T-cell (primary cell): ENCODE measurements at regions of chr4 and their contacts with region 1.

Region 1: DNA sequence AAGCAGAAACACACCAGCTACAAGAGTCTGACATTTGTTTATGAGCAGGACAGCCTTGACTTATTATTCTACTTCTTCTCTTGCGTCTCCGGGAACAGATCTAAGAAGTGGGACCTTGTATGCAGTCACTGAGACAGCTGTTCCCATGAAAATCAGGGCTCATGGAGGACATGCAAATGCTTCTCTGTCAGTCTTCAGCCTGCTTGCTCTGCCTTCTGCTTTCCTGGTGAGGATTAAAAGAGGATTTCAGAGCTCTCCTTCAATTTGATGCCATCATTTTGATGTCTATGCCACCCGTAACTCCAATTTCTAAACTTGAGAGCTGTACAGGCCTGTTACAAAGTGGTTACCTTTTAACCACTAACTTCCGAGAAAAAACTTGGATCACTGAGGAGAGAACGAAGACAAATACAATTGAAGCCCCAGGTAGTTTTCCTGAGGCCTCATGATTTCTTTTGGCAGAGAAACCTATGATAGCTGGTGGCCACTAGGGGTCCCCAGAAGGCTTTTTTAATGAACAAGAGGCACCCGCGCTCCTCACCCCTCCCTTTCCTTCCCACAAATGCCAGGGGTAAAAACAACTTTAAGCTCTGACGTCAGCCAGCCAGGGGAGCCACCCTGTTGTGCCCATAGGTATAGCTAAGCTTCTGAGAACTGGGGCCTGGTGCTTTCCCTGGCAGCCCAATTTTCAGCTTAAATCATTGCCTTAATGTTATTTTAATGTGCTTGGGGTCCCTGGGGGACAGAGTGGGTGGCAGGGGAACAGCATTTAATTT is 97.0 kb downstream of the DDIT4L start:
- DNase-seq: peak; percentile 55 to 95 (median 90)
- ATAC-seq: peak; percentile 98 to 99 (median 98)
- H3K4me3 ChIP-seq: no peak overlapping the region
- H3K4me3 Mint-ChIP-seq: peak overlapping the region; percentile 7 to 44 (median 35)
- H3K27ac ChIP-seq: no peak overlapping the region
- H3K27ac Mint-ChIP-seq: peak overlapping the region; percentile 90 to 91
- H3K4me1 ChIP-seq: peaks cover 2 to 12% of the 10 kb centered on the region in 2 experiments
- H3K4me1 Mint-ChIP-seq: peaks cover 16 to 30% (median 29%) of the 10 kb centered on the region in 3 donors
- H3K27me3 ChIP-seq: no peaks in the 10 kb centered on the region
- H3K27me3 Mint-ChIP-seq: peaks cover 0 to 4% of the 10 kb centered on the region in 2 donors

Region 2: DNA sequence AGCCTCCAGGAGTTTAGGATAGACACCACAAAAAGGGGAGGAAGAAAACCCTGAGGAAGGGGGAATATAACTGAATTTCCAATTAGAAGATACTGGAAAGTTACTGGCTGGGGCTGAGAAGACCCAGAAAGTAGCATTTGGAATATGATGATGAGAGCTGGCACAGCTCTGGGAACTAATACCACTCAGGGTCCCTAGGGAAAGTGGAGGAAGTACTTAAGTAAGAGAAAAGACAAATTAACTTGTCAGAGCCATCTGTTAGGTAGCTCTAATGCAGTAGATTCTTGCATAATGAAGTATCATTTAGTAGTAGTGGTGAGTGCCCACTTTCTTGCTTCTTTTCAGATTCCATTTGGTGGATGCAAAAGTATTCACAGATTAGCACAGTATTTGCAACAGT is 1344.1 kb before region 1 on chr4:
- CTCF ChIA-PET with region 1: interaction called in 1 of 2 experiments, 10 read pairs
- POLR2A ChIA-PET with region 1: no interaction called
- DNase-seq: no peak
- ATAC-seq: no peak
- H3K4me3 ChIP-seq: no peak overlapping the region
- H3K4me3 Mint-ChIP-seq: no peak overlapping the region
- H3K27ac ChIP-seq: no peak overlapping the region
- H3K27ac Mint-ChIP-seq: no peak overlapping the region
- H3K4me1 ChIP-seq: no peaks in the 10 kb centered on the region
- H3K4me1 Mint-ChIP-seq: peaks cover 2 to 3% (median 2%) of the 10 kb centered on the region in 3 donors
- H3K27me3 ChIP-seq: no peaks in the 10 kb centered on the region
- H3K27me3 Mint-ChIP-seq: no peaks in the 10 kb centered on the region

Region 3: DNA sequence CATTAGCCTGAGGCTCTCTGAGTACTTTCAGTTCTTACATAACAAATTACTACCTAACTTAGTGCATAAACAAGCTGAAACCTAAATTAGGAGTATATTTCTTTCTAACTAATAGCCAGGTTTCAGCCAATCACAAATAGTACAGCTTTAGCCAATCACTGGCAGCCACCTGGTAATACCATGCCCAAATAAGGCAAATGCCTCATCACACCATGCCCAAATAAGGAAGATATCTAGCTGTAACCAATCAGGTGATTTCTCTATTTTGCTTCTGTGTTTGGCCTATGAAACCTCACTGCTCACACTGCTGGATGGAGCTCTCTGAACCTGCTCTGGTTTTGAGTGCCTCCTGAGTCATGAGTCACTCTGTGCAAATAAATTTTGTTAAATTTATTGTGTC is 16.5 kb before region 1 on chr4:
- CTCF ChIA-PET with region 1: interaction called, 3 to 18 read pairs
- POLR2A ChIA-PET with region 1: no interaction called
- DNase-seq: no peak
- ATAC-seq: no peak
- H3K4me3 ChIP-seq: no peak overlapping the region
- H3K4me3 Mint-ChIP-seq: no peak overlapping the region
- H3K27ac ChIP-seq: no peak overlapping the region
- H3K27ac Mint-ChIP-seq: no peak overlapping the region
- H3K4me1 ChIP-seq: peaks cover 3% of the 10 kb centered on the region in 2 experiments
- H3K4me1 Mint-ChIP-seq: peaks cover 0 to 11% (median 4%) of the 10 kb centered on the region in 3 donors
- H3K27me3 ChIP-seq: no peaks in the 10 kb centered on the region
- H3K27me3 Mint-ChIP-seq: peaks cover 5% of the 10 kb centered on the region in 2 donors

Region 4: GRCh38 chr4:100106982-100107381 is 13.7 kb after region 1 on chr4:
- CTCF ChIA-PET with region 1: interaction called, 7 to 22 read pairs
- POLR2A ChIA-PET with region 1: no interaction called
- DNase-seq: peak in 20 of 35 experiments; percentile 4 to 51 (median 14)
- ATAC-seq: peak; percentile 63 to 96 (median 80)
- H3K4me3 ChIP-seq: no peak overlapping the region
- H3K4me3 Mint-ChIP-seq: no peak overlapping the region
- H3K27ac ChIP-seq: no peak overlapping the region
- H3K27ac Mint-ChIP-seq: peak overlapping the region in 1 of 2 donors; percentile 51
- H3K4me1 ChIP-seq: peaks cover 4 to 8% of the 10 kb centered on the region in 2 experiments
- H3K4me1 Mint-ChIP-seq: peaks cover 13 to 16% (median 13%) of the 10 kb centered on the region in 3 donors
- H3K27me3 ChIP-seq: no peaks in the 10 kb centered on the region
- H3K27me3 Mint-ChIP-seq: no peaks in the 10 kb centered on the region

Region 5: GRCh38 chr4:101730291-101731117 is 1637.2 kb after region 1 on chr4:
- CTCF ChIA-PET with region 1: interaction called, 3 to 20 read pairs
- POLR2A ChIA-PET with region 1: no interaction called
- DNase-seq: peak in 31 of 35 experiments; percentile 0 to 67 (median 19)
- ATAC-seq: peak in 3 of 4 experiments; percentile 56 to 68 (median 65)
- H3K4me3 ChIP-seq: no peak overlapping the region
- H3K4me3 Mint-ChIP-seq: no peak overlapping the region
- H3K27ac ChIP-seq: no peak overlapping the region
- H3K27ac Mint-ChIP-seq: no peak overlapping the region
- H3K4me1 ChIP-seq: no peaks in the 10 kb centered on the region
- H3K4me1 Mint-ChIP-seq: peaks cover 0 to 1% (median 0%) of the 10 kb centered on the region in 3 donors
- H3K27me3 ChIP-seq: no peaks in the 10 kb centered on the region
- H3K27me3 Mint-ChIP-seq: peaks cover 1 to 9% of the 10 kb centered on the region in 2 donors